GM10248 (cell line): ENCODE measurements at regions of chr19 and their contacts with region 1.

Region 1: GRCh38 chr19:10431943-10432735 is 11.8 kb downstream of the PDE4A start:
- DNase-seq: peak; percentile 83
- CTCF ChIP-seq: no peak

Region 2: DNA sequence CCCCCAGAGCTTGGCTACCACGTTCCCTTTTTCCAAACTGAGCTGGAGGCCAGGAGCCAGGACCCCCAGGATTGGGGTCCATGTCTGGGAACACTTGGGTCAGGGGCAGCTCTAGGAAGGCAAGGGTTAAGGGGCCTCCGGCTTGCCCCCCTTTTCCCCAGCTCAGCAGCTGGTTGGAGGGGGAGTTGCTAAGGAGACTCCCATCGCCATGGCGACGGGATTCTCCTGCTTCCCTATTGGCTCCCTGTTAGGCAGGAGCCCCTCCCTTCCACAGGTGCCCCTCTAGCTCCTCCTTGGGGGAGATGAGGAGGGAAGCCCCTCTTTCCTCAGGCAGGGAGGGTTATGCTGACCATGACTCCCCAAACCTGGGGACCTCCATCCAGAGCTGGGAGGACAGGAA is 22.1 kb after region 1 on chr19:
- CTCF ChIA-PET with region 1: interaction called, 22 read pairs
- POLR2A ChIA-PET with region 1: no interaction called
- DNase-seq: no peak
- CTCF ChIP-seq: no peak